ENCODE measurements at regions of chrX and their contacts with region 1.

Region 1: GRCh38 chrX:132353430-132353829 is 134.2 kb upstream of the RAP2C start:
- DNase-seq: no peak
- H3K4me3 ChIP-seq: no peak overlapping the region
- H3K27ac ChIP-seq: no peak overlapping the region
- H3K4me1 ChIP-seq: no peaks in the 10 kb centered on the region
- H3K27me3 ChIP-seq: peaks cover 0 to 4% (median 0%) of the 10 kb centered on the region in 7 donors
- CTCF ChIP-seq: no peak
- POLR2A ChIP-seq: no peak

Region 2: DNA sequence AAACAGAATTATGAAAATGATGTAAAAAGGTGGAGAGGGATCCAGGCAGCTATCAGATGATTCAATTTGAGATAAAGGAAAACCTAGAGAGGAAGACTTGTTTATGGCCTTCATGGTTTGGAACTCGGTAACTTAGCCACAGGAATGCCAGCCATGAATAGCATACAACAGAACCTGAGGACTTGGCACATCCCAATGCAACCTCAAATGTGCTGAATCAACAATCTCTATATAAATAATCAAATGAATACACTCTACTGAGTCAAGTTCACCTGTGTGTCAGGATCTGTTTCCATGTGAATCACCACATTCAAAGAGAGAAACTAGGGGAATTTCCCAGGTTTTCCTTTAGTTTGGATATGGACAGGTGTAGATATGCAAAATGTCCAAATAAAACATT is 48.5 kb after region 1 on chrX:
- intact Hi-C with region 1: loop called (anchors 10 kb)
- DNase-seq: no peak
- H3K4me3 ChIP-seq: no peak overlapping the region
- H3K27ac ChIP-seq: no peak overlapping the region
- H3K4me1 ChIP-seq: no peaks in the 10 kb centered on the region
- H3K27me3 ChIP-seq: peaks cover 0 to 6% (median 0%) of the 10 kb centered on the region in 7 donors
- CTCF ChIP-seq: no peak
- POLR2A ChIP-seq: no peak

Measured in spleen (tissue), 13 donors.